ENCODE measurements at regions of chr15 and their contacts with region 1.

Region 1: GRCh38 chr15:43225201-43225949 is 4.6 kb upstream of the EPB42 start:
- DNase-seq: no peak
- ATAC-seq: peak; percentile 88 to 98 (median 92)
- H3K4me3 ChIP-seq: no peak overlapping the region
- H3K27ac ChIP-seq: no peak overlapping the region
- H3K4me1 ChIP-seq: peaks cover 4% of the 10 kb centered on the region
- H3K27me3 ChIP-seq: no peaks in the 10 kb centered on the region
- CTCF ChIP-seq: peak; percentile 87

Region 2: DNA sequence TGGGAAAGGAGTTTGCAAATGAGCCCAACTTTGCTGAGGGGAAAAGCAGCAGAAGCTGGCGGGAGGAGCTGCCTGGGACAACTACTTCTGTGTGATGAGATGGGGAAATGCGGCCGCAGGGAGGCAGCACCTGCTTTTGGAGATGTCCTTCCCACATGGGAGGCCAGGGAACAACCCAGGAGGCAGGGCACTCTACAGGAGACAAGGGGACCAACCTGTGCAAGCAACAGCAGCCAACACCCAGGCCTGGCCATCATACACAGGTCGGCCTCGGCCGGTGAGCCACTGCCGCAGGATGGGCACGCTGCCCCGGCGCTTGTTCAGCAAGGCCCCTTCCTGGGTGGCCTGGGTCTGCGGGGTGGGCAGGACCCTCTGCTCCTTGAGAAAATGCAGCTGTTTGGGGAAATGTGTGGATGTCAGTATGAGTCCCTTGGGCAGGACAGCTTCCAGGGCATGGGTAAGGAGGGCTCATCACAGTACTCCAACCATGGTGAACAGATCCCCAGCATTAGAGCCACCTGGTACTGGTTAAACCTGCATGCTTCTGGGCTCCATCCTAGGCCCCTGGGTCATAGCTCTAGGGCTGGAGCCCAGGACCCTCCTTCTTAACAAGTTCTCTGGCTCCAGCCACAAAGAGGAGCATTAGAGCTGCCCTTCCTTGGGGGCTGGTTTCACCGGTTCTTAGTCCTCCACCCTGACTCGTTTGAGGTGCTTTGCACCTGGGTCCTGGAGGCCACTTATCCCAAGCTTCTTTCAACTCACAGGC is 16.1 kb before region 1 on chr15:
- intact Hi-C with region 1: no loop called
- DNase-seq: no peak
- ATAC-seq: peak in 1 of 4 donors; percentile 13
- H3K4me3 ChIP-seq: no peak overlapping the region
- H3K27ac ChIP-seq: no peak overlapping the region
- H3K4me1 ChIP-seq: no peaks in the 10 kb centered on the region
- H3K27me3 ChIP-seq: peaks cover 0 to 5% (median 0%) of the 10 kb centered on the region in 3 donors
- CTCF ChIP-seq: no peak

Region 3: DNA sequence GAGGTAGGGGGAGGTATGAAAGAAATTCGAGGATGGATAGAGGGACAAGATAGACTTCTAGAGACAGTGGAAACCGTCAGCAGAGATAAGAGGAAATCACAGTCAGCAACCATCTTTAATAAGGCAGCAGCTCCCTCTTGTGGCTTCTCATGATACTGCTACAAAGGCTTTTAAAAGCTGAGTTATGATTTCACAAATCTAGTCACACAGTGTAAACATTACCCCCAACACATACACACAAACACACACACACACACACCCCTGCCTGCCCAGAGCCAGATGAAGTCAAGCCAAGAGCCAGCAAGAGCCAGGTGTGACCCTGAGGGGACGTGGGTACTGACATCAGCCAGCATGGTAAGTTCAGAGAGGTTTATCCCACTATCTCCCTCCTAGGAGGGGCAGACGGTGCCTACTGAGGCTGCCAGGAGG is 60.2 kb after region 1 on chr15:
- intact Hi-C with region 1: loop called (anchors 1 to 2 kb)
- DNase-seq: no peak
- ATAC-seq: peak; percentile 79 to 91 (median 86)
- H3K4me3 ChIP-seq: no peak overlapping the region
- H3K27ac ChIP-seq: no peak overlapping the region
- H3K4me1 ChIP-seq: peaks cover 3% of the 10 kb centered on the region
- H3K27me3 ChIP-seq: no peaks in the 10 kb centered on the region
- CTCF ChIP-seq: peak; percentile 82